WTC11 (cell line): ENCODE measurements at regions of chr3 and their contacts with region 1.

Region 1: DNA sequence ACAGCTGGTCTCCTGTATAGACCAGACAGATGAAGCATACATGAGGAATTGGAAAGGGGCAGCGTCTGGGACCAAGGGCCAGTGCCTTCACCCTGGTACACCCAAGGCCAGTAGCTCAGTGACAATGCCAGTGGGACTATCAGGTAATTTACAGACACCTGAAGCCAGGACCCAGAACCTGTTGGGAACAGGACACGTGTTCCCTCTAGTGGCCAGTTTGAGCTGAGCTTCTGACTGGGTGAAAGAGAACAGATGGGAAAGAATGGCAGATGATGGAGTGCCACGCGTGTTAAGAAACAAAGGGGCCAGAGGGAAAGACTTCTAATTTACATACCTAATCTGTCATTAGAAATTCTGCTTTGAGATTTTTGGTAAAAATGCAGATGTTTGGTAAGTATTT is 5.1 kb upstream of the SLC25A38 start:
- DNase-seq: peak; percentile 71
- ATAC-seq: peak; percentile 89
- H3K4me3 Mint-ChIP-seq: no peak overlapping the region
- H3K27ac Mint-ChIP-seq: peak overlapping the region; percentile 46; the same call in 1 of the 2 replicates
- H3K4me1 Mint-ChIP-seq: peaks cover 33% of the 10 kb centered on the region
- H3K27me3 Mint-ChIP-seq: no peaks in the 10 kb centered on the region
- CTCF ChIP-seq: peak; percentile 42

Region 2: GRCh38 chr3:39189959-39190269 is 188.2 kb before region 1 on chr3:
- CTCF ChIA-PET with region 1: interaction called, 14 read pairs
- POLR2A ChIA-PET with region 1: no interaction called
- DNase-seq: peak; percentile 73
- ATAC-seq: peak; percentile 85
- H3K4me3 Mint-ChIP-seq: no peak overlapping the region
- H3K27ac Mint-ChIP-seq: no peak overlapping the region
- H3K4me1 Mint-ChIP-seq: 0 out of 2 replicates have a peak, but pooled peaks cover 4% of the 10 kb centered on the region
- H3K27me3 Mint-ChIP-seq: no peaks in the 10 kb centered on the region; the same call in 1 of the 2 replicates
- CTCF ChIP-seq: peak; percentile 63; the same call in 1 of the 2 replicates

Region 3: DNA sequence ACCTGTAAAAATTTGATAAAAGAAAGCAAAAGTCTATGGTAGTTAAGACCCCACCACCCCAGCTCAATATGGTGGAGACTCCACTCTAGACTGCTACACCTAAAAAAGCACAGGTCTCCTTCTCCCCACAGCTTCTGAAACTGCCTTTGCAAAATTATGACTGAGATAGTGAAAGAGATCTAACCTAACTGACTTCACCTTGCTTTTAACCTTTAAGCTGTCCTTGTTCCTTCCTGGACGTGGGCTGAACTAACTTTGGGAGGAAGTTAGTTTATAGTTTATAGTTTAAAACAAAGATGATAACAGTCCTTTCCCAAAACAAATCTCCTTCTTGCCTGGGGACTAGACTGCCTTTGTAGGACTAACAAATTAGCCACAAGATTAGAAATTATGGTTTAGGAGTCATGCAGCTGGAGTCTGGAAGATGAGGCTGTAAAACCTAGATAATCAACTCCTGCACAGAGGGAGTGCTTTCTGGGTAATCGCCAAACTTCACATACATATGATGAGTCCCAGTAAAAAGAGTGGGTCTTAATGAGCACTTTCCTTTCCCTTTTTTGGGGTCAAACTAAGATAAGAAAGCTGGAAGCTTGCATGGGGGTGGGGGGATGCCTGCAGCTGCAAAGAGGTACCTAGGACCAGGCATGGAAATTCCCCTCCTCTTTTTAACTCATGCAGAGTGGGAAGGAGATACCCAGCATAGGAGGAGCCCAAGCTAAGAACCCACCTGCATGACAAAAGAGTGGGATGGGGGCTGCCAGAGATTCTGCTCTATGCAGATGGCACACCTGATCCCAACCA is 31.1 kb before region 1 on chr3:
- CTCF ChIA-PET with region 1: interaction called, 12 read pairs
- POLR2A ChIA-PET with region 1: no interaction called
- DNase-seq: no peak
- ATAC-seq: peak; percentile 92
- H3K4me3 Mint-ChIP-seq: no peak overlapping the region
- H3K27ac Mint-ChIP-seq: no peak overlapping the region
- H3K4me1 Mint-ChIP-seq: peaks cover 35% of the 10 kb centered on the region
- H3K27me3 Mint-ChIP-seq: no peaks in the 10 kb centered on the region
- CTCF ChIP-seq: no peak

Region 4: DNA sequence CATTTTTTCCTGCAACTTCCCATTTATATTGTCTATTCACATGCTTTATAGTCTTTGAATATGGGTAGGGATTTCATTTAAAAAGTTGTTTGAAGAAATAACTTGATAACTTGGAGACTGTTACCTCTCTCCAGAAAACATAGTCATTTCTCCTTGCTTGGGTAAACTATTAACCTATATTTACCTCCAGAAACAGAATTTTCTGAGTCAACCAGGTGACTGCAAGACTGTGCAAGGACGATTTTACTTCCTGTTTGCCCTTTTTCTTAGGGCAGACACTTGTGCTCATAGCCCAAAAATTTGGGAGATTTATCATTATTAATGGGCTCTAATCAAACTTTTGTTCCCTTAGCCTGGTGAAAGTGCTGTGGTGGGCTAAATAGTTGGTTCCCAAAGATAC is 75.0 kb after region 1 on chr3:
- CTCF ChIA-PET with region 1: no interaction called
- POLR2A ChIA-PET with region 1: no interaction called
- DNase-seq: no peak
- ATAC-seq: no peak
- H3K4me3 Mint-ChIP-seq: no peak overlapping the region
- H3K27ac Mint-ChIP-seq: no peak overlapping the region
- H3K4me1 Mint-ChIP-seq: peaks cover 5% of the 10 kb centered on the region
- H3K27me3 Mint-ChIP-seq: no peaks in the 10 kb centered on the region
- CTCF ChIP-seq: no peak